ENCODE measurements at regions of chr11 and their contacts with region 1.

Region 1: GRCh38 chr11:35822815-35823495 is 120.9 kb upstream of the LDLRAD3 start:
- H3K4me3 ChIP-seq: no peak overlapping the region
- H3K27ac ChIP-seq: no peak overlapping the region
- H3K4me1 ChIP-seq: no peaks in the 10 kb centered on the region
- CTCF ChIP-seq: no peak

Region 2: DNA sequence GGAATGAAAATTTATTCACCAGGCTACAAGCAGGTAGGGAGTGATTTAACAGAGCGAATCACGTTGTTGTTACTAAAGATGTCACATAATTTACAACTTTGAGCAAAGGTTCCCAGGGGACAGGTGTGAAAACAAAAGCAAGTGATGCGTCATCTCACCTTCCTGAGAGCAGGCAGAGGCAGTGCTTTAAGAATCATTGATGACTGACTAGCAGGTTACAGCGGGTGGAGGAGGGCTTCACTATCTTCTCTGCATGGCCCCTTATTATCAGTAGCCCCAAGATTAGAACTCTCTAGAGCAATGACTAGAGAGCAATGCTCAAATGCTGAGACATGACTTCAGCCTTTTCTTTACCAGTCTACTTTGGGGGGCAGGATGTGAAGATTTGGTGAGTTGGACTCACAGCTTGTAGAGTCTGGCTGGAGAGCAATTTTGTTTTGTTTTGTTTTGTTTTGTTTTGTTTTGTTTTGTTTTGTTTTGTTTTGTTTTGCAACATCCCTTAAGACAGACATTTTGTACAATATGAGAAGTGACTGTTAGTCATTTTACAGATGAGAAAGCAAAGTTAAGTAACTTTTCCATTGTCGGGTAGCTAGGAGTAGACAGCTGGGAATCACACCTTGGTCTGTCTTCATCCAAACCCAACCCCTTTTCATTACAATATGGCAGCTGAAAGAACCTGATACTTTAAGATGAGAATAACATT is 488.4 kb before region 1 on chr11:
- CTCF ChIA-PET with region 1: no interaction called
- POLR2A ChIA-PET with region 1: no interaction called
- H3K4me3 ChIP-seq: no peak overlapping the region
- H3K27ac ChIP-seq: no peak overlapping the region
- H3K4me1 ChIP-seq: no peaks in the 10 kb centered on the region
- CTCF ChIP-seq: no peak

Region 3: DNA sequence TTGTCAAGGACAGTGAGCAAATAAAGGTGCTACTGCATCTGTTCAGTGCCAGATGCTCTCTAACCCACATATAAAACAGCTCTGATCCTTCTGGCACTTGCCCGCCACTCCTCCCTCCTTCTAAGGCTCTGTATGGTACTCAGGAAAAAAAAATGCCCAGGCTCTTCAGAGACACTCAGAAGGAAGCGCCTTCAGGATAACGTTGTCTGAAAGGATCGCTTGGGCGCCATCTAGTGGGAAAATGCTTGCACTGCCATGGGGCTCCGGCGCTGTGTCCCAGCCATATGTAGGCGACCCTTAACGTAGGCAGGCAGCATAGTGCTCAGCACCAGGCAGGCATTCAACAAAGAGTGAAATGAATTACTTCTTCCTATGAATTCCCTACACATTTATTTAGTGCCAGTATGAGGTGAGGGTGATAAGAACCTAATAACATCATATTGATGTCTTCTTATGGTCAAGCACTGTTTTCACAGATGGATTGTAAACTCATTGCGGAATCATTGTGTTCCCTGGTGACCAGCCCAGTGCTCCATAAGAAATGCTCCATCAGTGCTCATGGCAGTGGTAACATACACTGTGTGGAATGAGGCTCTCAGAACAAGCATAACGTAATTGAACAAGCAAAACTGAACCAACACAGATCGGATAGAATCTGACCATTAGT is 337.2 kb before region 1 on chr11:
- CTCF ChIA-PET with region 1: interaction called, 14 read pairs
- POLR2A ChIA-PET with region 1: no interaction called
- H3K4me3 ChIP-seq: no peak overlapping the region
- H3K27ac ChIP-seq: no peak overlapping the region
- H3K4me1 ChIP-seq: no peaks in the 10 kb centered on the region
- CTCF ChIP-seq: peak; percentile 45; the same call in 1 of the 2 replicates

Region 4: GRCh38 chr11:35529971-35530495 is 292.9 kb before region 1 on chr11:
- CTCF ChIA-PET with region 1: no interaction called
- POLR2A ChIA-PET with region 1: no interaction called
- H3K4me3 ChIP-seq: no peak overlapping the region
- H3K27ac ChIP-seq: no peak overlapping the region
- H3K4me1 ChIP-seq: no peaks in the 10 kb centered on the region
- CTCF ChIP-seq: no peak

Region 5: DNA sequence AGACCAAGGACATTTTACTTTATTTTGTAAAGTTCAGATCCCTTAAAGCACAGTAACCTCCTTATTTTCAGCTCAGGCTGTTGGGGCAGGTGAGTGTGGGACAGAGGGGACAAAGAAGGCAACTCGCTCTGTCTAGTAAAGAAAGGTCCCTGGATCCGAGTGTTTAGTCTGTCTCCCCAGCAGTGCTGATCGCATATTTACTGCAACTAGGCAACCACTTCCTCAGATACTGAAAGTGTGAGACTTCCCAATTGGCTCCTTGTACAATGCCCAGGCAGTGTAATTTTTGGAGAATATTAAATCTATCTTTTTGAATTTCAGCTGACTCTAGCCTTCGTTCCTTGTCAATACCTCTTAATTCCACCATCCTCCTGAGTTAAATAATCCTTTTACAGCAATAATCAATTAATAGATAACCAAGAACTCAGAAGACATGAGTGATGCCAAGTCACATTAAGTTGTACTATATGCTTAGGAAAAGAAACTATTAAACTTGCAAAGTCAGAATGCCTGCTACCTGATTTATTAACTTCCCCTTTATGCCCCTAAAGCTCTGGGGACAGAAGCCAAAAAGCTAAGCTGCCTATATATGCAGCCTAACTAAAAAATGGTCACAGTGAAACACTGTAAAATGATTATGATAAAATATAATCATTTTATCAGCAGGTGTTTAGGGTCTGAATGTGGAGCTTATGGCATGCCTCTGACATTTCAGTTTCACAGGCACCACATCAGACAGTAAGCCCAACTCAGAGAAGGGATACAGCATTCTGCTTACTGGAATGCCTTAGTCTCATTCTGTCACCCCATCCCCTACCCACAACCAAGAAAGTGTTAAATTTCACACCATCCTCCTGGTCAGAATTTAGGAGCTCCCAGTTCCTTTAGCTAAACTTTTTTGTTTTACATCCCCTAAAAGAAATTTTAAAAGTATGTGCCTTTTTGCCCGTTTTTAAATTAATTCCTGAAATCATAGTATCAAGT is 21.7 kb before region 1 on chr11:
- CTCF ChIA-PET with region 1: interaction called, 53 read pairs
- POLR2A ChIA-PET with region 1: no interaction called
- H3K4me3 ChIP-seq: no peak overlapping the region
- H3K27ac ChIP-seq: no peak overlapping the region
- H3K4me1 ChIP-seq: no peaks in the 10 kb centered on the region
- CTCF ChIP-seq: no peak

Region 6: GRCh38 chr11:35907648-35908431 is 84.9 kb after region 1 on chr11:
- CTCF ChIA-PET with region 1: no interaction called
- POLR2A ChIA-PET with region 1: no interaction called
- H3K4me3 ChIP-seq: no peak overlapping the region
- H3K27ac ChIP-seq: no peak overlapping the region
- H3K4me1 ChIP-seq: no peaks in the 10 kb centered on the region
- CTCF ChIP-seq: no peak

Region 7: DNA sequence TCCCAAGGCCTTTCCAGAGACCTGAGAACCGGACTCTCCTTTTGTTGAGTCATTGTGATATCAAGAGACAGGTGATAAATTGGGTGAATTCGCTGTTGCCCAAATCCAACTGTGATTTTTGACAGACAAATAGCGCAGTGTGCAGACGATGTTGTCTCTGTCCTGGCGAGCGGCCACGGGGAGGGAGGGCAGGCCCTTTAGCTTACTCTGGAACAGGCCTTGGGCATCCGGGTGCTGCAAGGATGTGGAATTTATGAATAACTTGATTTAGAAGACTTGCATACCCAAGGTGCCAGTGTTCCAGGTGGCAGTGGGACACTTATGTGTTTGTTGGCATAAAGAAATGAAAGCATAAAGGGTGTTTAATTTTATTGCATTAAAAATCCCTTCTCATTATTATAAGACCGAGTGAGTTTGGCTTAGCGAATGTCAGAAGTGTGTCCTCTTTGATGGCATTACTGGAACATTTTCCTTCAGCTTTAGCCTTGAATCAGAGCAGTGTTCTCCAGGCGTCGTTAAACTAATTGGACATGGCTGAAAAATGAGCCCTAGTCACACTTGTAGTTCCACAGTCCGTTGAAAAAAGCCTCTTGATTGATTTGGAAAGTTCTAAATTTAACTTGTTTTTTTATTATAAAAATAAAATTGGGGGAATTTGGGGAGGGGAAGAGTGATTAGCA is 130.3 kb after region 1 on chr11:
- CTCF ChIA-PET with region 1: interaction called, 10 read pairs
- POLR2A ChIA-PET with region 1: no interaction called
- H3K4me3 ChIP-seq: no peak overlapping the region
- H3K27ac ChIP-seq: no peak overlapping the region
- H3K4me1 ChIP-seq: no peaks in the 10 kb centered on the region
- CTCF ChIP-seq: no peak

Region 8: GRCh38 chr11:36056160-36056751 is 233.3 kb after region 1 on chr11:
- CTCF ChIA-PET with region 1: interaction called, 24 read pairs
- POLR2A ChIA-PET with region 1: no interaction called
- H3K4me3 ChIP-seq: no peak overlapping the region
- H3K27ac ChIP-seq: no peak overlapping the region
- H3K4me1 ChIP-seq: peaks cover 7% of the 10 kb centered on the region
- CTCF ChIP-seq: no peak

Region 9: DNA sequence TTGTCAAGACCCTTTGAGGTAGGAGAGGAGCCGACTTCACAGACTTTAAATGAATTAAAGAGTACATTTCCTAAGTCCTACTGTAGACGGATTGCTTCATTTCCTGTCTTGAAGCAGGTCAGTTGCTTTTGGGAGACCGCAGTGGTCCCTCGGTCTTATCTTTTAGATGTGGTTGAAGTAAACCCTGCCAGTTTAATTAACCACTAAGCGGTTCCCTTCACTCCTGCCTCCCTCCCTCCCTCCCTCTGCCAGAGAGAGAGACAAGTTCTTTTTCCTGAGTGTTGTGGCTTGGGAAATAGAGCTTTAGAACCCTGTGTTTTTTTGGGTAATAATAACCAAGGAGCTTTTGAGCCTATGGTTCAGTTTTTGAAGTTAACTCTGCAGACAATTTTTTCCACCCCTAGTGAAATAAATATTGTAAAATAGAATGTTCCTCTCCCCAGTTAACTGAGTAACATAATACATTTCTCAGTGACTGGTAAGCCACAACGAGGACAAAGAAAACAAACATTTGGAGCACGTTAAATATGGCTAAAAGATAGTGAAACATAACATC is 268.4 kb after region 1 on chr11:
- CTCF ChIA-PET with region 1: interaction called, 10 read pairs
- POLR2A ChIA-PET with region 1: no interaction called
- H3K4me3 ChIP-seq: no peak overlapping the region
- H3K27ac ChIP-seq: peak overlapping the region; percentile 32; the same call in 1 of the 2 replicates
- H3K4me1 ChIP-seq: peaks cover 5% of the 10 kb centered on the region; the same call in 1 of the 2 replicates
- CTCF ChIP-seq: no peak

Region 10: DNA sequence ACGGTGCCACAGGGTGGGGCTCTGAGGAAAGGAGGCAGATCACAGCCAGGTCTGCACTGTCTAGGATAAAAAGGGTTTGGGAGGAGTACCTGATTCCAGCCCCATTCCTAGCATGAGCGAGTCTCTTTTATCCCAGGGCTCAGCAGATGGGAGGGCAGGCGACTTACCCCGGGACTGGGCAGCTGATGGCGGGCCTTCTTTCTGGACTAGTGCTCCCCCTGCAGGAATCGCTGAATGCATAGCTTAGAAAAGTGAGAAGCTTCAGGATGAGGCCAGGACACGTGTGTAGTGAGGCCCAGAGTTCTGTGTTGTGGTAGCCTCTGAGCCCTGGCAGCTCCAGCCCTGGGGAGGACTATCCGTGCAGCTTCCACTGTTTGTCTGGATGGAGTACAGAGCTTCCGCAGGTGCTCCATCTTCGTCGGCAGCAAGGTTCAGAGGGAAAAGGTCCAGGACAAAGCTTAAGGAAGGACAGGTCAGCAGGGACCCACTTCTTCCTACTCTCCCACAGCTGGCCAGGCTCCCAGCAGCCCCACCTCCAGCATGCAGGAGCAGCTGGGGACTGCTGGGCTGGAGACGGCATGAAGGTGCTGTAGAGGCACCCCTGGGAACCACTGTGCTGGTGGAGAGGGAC is 435.9 kb after region 1 on chr11:
- CTCF ChIA-PET with region 1: interaction called, 30 read pairs
- POLR2A ChIA-PET with region 1: interaction called, 5 read pairs
- H3K4me3 ChIP-seq: no peak overlapping the region
- H3K27ac ChIP-seq: no peak overlapping the region
- H3K4me1 ChIP-seq: no peaks in the 10 kb centered on the region
- CTCF ChIP-seq: peak; percentile 18; the same call in 1 of the 2 replicates

Measured in HEK293 (cell line).